ENCODE measurements at regions of chr19 and their contacts with region 1.

Region 1: GRCh38 chr19:506404-507285 is 652 bp upstream of the TPGS1 start:
- DNase-seq: peak; percentile 91
- ATAC-seq: peak; percentile 72
- H3K4me3 Mint-ChIP-seq: peak overlapping the region; percentile 93
- H3K27ac Mint-ChIP-seq: peak overlapping the region; percentile 100
- H3K4me1 Mint-ChIP-seq: peaks cover 17% of the 10 kb centered on the region
- H3K27me3 Mint-ChIP-seq: peaks cover 17% of the 10 kb centered on the region
- CTCF ChIP-seq: peak; percentile 84

Region 2: GRCh38 chr19:347946-348861 is 158.4 kb before region 1 on chr19:
- CTCF ChIA-PET with region 1: interaction called, 20 read pairs
- POLR2A ChIA-PET with region 1: interaction called, 3 read pairs
- DNase-seq: peak; percentile 61
- ATAC-seq: peak; percentile 49
- H3K4me3 Mint-ChIP-seq: no peak overlapping the region
- H3K27ac Mint-ChIP-seq: no peak overlapping the region
- H3K4me1 Mint-ChIP-seq: peaks cover 15% of the 10 kb centered on the region
- H3K27me3 Mint-ChIP-seq: peaks cover 25% of the 10 kb centered on the region
- CTCF ChIP-seq: no peak

Region 3: DNA sequence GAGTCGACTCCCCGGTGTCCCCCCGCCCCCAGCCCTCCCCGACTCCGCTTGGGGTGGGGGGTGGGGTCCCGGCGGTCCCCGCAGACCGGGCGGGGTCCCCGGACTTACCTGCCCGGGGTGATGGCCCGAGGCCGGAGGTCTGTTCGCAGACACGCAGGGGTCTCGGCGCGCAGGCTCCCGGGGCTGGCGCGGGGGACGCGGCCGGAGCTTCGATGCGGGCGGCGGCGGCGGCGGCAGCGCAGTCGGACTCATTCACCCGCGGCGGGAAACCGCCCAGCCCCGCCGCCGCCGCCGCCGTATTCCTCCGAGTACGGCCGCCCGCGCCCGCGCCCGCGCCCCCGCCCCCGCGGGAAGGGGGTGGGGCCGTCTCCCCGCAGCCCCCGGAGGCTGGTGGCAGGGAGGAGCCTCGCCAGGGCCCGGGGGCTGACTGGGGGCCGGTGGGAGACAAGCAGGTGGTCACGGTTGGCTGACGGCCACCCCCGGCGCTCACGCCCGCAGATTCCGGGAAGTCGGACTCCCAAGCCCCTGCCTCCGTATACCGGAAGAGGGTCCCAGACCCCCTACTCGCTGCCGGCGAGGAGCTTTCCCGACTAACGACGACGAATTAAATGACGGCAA is 97.6 kb before region 1 on chr19 and contains the start of gene C2CD4C:
- CTCF ChIA-PET with region 1: interaction called, 15 read pairs
- POLR2A ChIA-PET with region 1: no interaction called
- DNase-seq: no peak
- ATAC-seq: peak; percentile 6; the same call in 1 of the 2 replicates
- H3K4me3 Mint-ChIP-seq: peak within 1 kb of the TSS; percentile 81
- H3K27ac Mint-ChIP-seq: peak within 1 kb of the TSS; percentile 30; the same call in 1 of the 2 replicates
- H3K4me1 Mint-ChIP-seq: peaks cover 10% of the 10 kb centered on the region
- H3K27me3 Mint-ChIP-seq: peaks cover 11% of the 10 kb centered on the region
- CTCF ChIP-seq: no peak
- total RNA-seq, gene C2CD4C: 6.6 to 9.8 TPM (median 7.9 TPM) in 3 replicates

Region 4: DNA sequence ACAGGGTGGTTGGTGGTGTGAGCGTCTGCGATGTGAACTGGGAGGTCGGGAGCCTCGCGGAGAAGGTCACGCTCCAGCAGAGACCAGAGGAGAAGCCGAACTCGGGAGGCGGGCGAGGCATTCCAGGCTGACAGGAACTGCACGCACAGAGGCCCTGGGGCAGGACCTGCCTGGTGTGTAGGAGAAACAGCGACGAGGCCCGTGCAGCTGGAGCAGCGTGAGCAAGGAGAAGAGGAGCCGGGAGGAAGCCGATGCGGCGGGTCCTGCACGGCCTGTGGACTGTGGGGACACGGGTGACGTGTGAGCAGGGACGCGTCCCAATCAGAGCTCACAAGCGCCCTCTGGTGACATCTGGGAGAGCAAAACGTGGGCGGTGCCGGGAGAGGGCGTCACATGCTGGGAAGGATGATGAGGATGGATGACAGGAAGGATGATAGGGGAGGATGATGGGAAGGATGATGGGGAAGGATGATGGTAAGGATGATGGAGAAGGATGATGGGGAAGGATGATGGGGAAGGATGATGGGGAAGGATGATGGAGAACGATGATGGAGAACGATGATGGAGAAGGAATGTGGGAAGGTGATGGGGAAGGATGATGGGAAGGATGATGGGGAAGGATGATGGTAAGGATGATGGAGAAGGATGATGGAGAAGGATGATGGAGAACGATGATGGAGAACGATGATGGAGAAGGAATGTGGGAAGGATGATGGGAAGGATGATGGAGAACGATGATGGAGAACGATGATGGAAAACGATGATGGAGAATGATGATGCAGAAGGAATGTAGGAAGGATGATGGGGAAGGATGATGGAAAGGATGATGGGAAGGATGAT is 26.4 kb before region 1 on chr19:
- CTCF ChIA-PET with region 1: interaction called, 25 read pairs
- POLR2A ChIA-PET with region 1: no interaction called
- DNase-seq: peak; percentile 81
- ATAC-seq: peak; percentile 75
- H3K4me3 Mint-ChIP-seq: no peak overlapping the region
- H3K27ac Mint-ChIP-seq: no peak overlapping the region
- H3K4me1 Mint-ChIP-seq: no peaks in the 10 kb centered on the region; the same call in 1 of the 2 replicates
- H3K27me3 Mint-ChIP-seq: peaks cover 14% of the 10 kb centered on the region; the same call in 1 of the 2 replicates
- CTCF ChIP-seq: peak; percentile 58

Region 5: GRCh38 chr19:495402-496186 is 11.1 kb before region 1 on chr19:
- CTCF ChIA-PET with region 1: interaction called, 57 read pairs
- POLR2A ChIA-PET with region 1: interaction called, 7 read pairs
- DNase-seq: peak; percentile 82
- ATAC-seq: peak; percentile 55
- H3K4me3 Mint-ChIP-seq: peak overlapping the region; percentile 64
- H3K27ac Mint-ChIP-seq: no peak overlapping the region
- H3K4me1 Mint-ChIP-seq: peaks cover 8% of the 10 kb centered on the region
- H3K27me3 Mint-ChIP-seq: peaks cover 33% of the 10 kb centered on the region
- CTCF ChIP-seq: peak; percentile 98

Region 6: DNA sequence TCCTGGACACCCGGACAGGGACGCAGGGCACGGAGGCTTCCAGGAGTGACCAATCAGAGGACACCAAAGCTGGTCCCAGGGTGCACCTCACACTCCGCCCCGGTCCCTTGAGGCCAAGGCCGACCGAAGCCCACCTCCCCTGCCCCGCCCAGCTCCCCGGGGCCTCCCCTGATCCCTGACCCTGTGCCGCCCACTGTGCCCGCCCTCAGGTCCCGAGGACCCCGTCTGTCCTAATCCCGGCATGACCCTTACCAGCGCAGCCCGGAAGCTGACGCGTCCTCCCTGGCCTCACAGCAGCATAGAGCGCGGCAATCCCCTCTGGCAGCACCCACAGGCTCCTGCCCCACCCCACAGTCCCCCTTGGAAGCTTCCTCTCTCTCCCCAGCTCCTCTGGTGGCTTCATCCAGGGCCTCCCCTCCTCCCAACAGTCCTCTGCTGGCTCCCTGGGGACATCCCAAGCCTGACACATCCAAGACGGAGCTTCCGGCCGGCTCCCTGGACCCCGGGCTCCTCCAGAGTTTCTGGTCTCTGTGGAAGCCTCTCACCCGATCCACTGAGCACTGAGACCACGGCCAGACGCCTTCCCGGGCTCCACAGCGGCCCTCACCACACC is 17.5 kb after region 1 on chr19:
- CTCF ChIA-PET with region 1: interaction called, 82 read pairs
- POLR2A ChIA-PET with region 1: interaction called, 6 read pairs
- DNase-seq: no peak
- ATAC-seq: no peak
- H3K4me3 Mint-ChIP-seq: no peak overlapping the region
- H3K27ac Mint-ChIP-seq: no peak overlapping the region
- H3K4me1 Mint-ChIP-seq: peaks cover 8% of the 10 kb centered on the region
- H3K27me3 Mint-ChIP-seq: peaks cover 39% of the 10 kb centered on the region
- CTCF ChIP-seq: no peak